PC-9 (cell line): ENCODE measurements at regions of chr17 and their contacts with region 1.

Region 1: GRCh38 chr17:52979921-52980320 is 821.4 kb upstream of the CA10 start:
- DNase-seq: no peak
- H3K4me3 ChIP-seq: no peak overlapping the region
- H3K27ac ChIP-seq: no peak overlapping the region
- H3K4me1 ChIP-seq: no peaks in the 10 kb centered on the region
- H3K27me3 ChIP-seq: no peaks in the 10 kb centered on the region
- CTCF ChIP-seq: no peak

Region 2: GRCh38 chr17:53819956-53820355 is 840.0 kb after region 1 on chr17:
- CTCF ChIA-PET with region 1: no interaction called
- POLR2A ChIA-PET with region 1: no interaction called
- intact Hi-C with region 1: loop called (anchors 5 kb)
- DNase-seq: no peak
- H3K4me3 ChIP-seq: no peak overlapping the region
- H3K27ac ChIP-seq: no peak overlapping the region
- H3K4me1 ChIP-seq: no peaks in the 10 kb centered on the region
- H3K27me3 ChIP-seq: peaks cover 11% of the 10 kb centered on the region; the same call in 1 of the 2 replicates
- CTCF ChIP-seq: no peak